Activated B cell treated with CpG ODN at 0.5 μM for 24 hours (primary cell): ENCODE measurements at regions of chr1 and their contacts with region 1.

Region 1: DNA sequence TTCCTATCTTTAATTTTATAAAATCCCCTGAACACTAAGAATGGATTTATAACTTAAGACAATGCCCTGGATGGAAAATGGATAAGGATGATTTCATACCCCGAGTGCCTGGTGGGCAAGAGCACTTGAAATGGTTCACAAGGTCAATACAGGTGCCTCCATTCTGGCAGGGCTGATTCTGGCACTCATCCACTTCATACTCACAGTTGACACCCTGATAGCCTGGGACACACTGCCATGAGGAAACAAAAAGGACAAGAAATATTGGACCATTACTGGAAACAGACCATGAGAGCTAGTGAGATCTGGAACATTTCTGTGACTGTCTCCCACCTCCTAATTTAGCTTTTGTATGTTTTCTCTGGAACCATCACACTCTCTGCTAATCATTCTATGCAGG is 39.1 kb upstream of the ADAM30 start:
- DNase-seq: no peak
- ATAC-seq: no peak
- H3K4me3 Mint-ChIP-seq: no peak overlapping the region
- H3K27ac Mint-ChIP-seq: no peak overlapping the region
- H3K4me1 Mint-ChIP-seq: no peaks in the 10 kb centered on the region
- H3K27me3 Mint-ChIP-seq: no peaks in the 10 kb centered on the region
- CTCF ChIP-seq: no peak

Region 2: DNA sequence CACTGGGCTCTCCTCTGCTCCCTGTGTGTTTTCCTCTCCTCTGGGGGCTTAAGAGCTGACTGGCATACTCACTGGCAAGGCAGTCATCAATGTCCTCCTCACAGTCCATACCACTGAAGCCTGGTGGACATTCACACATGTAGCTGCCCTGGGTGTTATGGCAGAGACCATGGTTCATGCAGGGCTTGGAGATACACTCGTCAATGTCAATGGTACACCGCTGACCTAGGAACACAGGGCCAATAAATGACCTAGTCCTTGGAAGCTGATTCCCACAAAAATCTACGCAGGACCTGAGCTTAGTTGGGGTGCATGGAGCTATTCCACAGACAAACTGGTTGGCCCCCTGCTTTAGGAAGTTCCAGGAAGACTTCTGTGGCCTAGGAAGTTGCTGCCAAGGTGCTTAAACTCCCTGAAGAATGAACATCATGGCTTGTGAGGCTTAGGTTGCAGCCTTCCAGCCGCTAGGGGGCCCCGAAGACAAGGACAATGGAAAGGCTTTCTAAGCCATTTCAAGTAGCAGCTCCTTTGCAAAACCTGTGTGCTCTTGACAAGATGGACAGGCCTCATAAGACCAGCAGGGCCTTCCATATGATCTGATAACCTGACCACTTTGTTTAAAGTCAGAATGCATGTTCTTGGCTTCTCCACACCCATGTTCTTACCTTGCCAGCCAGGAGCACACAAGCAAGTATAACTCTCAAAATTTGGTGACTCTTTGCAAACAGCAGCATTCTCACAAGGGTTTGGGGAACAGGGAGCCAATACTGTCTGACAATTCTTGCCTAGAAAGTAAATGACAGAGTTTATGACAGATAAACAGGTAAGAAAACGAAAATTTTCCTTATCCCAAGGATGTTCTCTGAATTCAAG is 13.2 kb after region 1 on chr1:
- CTCF ChIA-PET with region 1: interaction called, 5 read pairs
- POLR2A ChIA-PET with region 1: no interaction called
- intact Hi-C with region 1: loop called (anchors 1 kb)
- DNase-seq: peak; percentile 57
- ATAC-seq: peak; percentile 71
- H3K4me3 Mint-ChIP-seq: no peak overlapping the region
- H3K27ac Mint-ChIP-seq: no peak overlapping the region
- H3K4me1 Mint-ChIP-seq: peaks cover 3% of the 10 kb centered on the region
- H3K27me3 Mint-ChIP-seq: no peaks in the 10 kb centered on the region
- CTCF ChIP-seq: peak; percentile 48

Region 3: GRCh38 chr1:119956306-119956705 is 20.9 kb after region 1 on chr1:
- CTCF ChIA-PET with region 1: no interaction called
- POLR2A ChIA-PET with region 1: interaction called, 4 read pairs
- intact Hi-C with region 1: loop called (anchors 1 kb)
- DNase-seq: no peak
- ATAC-seq: no peak
- H3K4me3 Mint-ChIP-seq: no peak overlapping the region
- H3K27ac Mint-ChIP-seq: no peak overlapping the region
- H3K4me1 Mint-ChIP-seq: no peaks in the 10 kb centered on the region
- H3K27me3 Mint-ChIP-seq: no peaks in the 10 kb centered on the region
- CTCF ChIP-seq: no peak

Region 4: GRCh38 chr1:119974013-119974412 is 38.6 kb after region 1 on chr1:
- CTCF ChIA-PET with region 1: no interaction called
- POLR2A ChIA-PET with region 1: no interaction called
- intact Hi-C with region 1: loop called (anchors 5 kb)
- DNase-seq: no peak
- ATAC-seq: no peak
- H3K4me3 Mint-ChIP-seq: no peak overlapping the region
- H3K27ac Mint-ChIP-seq: no peak overlapping the region
- H3K4me1 Mint-ChIP-seq: peaks cover under 1% of the 10 kb centered on the region
- H3K27me3 Mint-ChIP-seq: no peaks in the 10 kb centered on the region
- CTCF ChIP-seq: no peak